PC-9 (cell line): ENCODE measurements at regions of chr3 and their contacts with region 1.

Region 1: DNA sequence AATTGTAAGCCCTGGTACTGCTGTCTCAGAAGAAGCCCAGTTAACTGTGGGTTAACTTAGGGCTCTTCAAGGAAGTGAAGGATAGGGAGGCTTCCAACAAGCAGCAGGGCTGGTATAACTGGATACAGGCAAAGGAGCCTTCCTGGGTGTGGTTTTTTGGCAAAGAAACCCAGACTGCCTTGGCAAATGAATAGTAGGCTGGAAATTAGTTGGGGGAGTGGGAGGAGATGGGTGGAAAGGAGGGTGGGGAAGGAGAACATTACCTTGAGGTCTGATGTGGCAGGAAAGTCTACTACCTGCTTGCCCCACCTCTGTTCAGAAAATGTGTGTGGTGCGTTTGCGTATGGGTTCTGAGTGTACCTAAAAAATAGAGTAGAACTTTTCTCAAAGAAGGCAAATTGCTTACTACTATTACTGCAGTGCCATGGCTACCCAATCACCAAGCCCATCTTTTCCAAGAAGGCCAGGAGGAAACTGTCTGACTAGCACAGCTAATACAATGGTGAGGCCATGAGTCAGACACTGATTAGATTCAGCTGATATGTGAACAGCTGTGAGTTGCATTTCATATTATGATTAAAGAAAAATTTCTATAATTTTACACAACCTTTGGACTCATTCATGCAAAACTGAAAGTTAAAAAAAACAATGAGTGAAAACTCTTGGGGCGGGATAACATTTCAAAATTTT is 55.2 kb downstream of the SPTSSB start:
- DNase-seq: peak; percentile 82 to 88
- H3K4me3 ChIP-seq: no peak overlapping the region
- H3K27ac ChIP-seq: peak overlapping the region; percentile 64
- H3K4me1 ChIP-seq: peaks cover 32% of the 10 kb centered on the region
- H3K27me3 ChIP-seq: no peaks in the 10 kb centered on the region
- CTCF ChIP-seq: no peak

Region 2: DNA sequence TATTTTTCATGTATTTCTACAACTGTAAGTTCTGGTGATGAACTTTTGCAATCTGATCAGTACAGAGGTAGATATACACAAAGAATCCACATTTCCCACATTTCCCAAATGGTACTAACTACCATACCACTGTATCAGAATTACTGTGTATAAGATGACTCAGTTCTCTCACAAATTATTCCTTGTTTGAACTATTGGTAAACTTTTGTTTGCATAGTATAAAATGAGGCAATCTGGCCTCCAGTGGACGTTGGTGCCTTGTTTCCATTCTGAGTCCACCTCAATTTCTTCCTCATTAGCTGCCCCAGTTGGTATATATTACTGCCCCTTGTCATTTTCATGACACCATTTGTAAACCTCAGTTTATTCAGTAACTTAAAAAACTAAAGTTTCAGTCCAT is 16.7 kb after region 1 on chr3:
- CTCF ChIA-PET with region 1: no interaction called
- POLR2A ChIA-PET with region 1: no interaction called
- intact Hi-C with region 1: no loop called
- DNase-seq: peak in 1 of 2 experiments; percentile 70
- H3K4me3 ChIP-seq: no peak overlapping the region
- H3K27ac ChIP-seq: no peak overlapping the region; the same call in 1 of the 2 replicates
- H3K4me1 ChIP-seq: peaks cover 9% of the 10 kb centered on the region
- H3K27me3 ChIP-seq: no peaks in the 10 kb centered on the region
- CTCF ChIP-seq: no peak

Region 3: GRCh38 chr3:161349529-161350278 is 33.6 kb after region 1 on chr3:
- CTCF ChIA-PET with region 1: no interaction called
- POLR2A ChIA-PET with region 1: no interaction called
- intact Hi-C with region 1: loop called (anchors 1 kb)
- DNase-seq: peak; percentile 68 to 97
- H3K4me3 ChIP-seq: no peak overlapping the region
- H3K27ac ChIP-seq: peak overlapping the region; percentile 62
- H3K4me1 ChIP-seq: peaks cover 39% of the 10 kb centered on the region
- H3K27me3 ChIP-seq: no peaks in the 10 kb centered on the region
- CTCF ChIP-seq: no peak

Region 4: DNA sequence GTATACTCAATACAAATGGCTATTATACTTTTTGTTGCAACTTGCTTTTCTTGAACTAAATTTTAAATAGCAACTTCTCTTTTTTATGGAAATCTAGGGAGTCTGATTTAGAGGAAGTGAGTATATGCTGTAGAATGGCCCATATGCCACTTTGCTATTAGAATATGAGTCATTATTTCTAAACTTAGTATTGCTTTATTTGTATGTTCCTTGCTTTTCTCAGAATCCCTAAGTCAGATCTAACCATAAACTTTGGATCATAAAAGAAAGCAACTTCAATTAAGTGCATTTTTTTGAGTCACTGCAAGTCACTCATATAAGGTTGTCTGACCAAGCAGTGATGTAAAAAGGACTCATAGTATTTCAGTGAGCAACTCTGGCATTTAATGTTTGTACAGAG is 72.7 kb after region 1 on chr3:
- CTCF ChIA-PET with region 1: no interaction called
- POLR2A ChIA-PET with region 1: no interaction called
- intact Hi-C with region 1: no loop called
- DNase-seq: no peak
- H3K4me3 ChIP-seq: no peak overlapping the region
- H3K27ac ChIP-seq: no peak overlapping the region
- H3K4me1 ChIP-seq: no peaks in the 10 kb centered on the region
- H3K27me3 ChIP-seq: no peaks in the 10 kb centered on the region
- CTCF ChIP-seq: no peak

Region 5: GRCh38 chr3:161415497-161416251 is 99.5 kb after region 1 on chr3:
- CTCF ChIA-PET with region 1: no interaction called
- POLR2A ChIA-PET with region 1: no interaction called
- intact Hi-C with region 1: loop called (anchors 2 kb)
- DNase-seq: peak in 1 of 2 experiments; percentile 86
- H3K4me3 ChIP-seq: peak overlapping the region; percentile 10; the same call in 1 of the 2 replicates
- H3K27ac ChIP-seq: peak overlapping the region; percentile 85
- H3K4me1 ChIP-seq: peaks cover 42% of the 10 kb centered on the region
- H3K27me3 ChIP-seq: no peaks in the 10 kb centered on the region
- CTCF ChIP-seq: no peak

Region 6: GRCh38 chr3:161444006-161444693 is 128.0 kb after region 1 on chr3:
- CTCF ChIA-PET with region 1: no interaction called
- POLR2A ChIA-PET with region 1: no interaction called
- intact Hi-C with region 1: no loop called
- DNase-seq: no peak
- H3K4me3 ChIP-seq: no peak overlapping the region
- H3K27ac ChIP-seq: no peak overlapping the region
- H3K4me1 ChIP-seq: no peaks in the 10 kb centered on the region
- H3K27me3 ChIP-seq: no peaks in the 10 kb centered on the region
- CTCF ChIP-seq: no peak